ENCODE measurements at regions of chr17 and their contacts with region 1.

Region 1: DNA sequence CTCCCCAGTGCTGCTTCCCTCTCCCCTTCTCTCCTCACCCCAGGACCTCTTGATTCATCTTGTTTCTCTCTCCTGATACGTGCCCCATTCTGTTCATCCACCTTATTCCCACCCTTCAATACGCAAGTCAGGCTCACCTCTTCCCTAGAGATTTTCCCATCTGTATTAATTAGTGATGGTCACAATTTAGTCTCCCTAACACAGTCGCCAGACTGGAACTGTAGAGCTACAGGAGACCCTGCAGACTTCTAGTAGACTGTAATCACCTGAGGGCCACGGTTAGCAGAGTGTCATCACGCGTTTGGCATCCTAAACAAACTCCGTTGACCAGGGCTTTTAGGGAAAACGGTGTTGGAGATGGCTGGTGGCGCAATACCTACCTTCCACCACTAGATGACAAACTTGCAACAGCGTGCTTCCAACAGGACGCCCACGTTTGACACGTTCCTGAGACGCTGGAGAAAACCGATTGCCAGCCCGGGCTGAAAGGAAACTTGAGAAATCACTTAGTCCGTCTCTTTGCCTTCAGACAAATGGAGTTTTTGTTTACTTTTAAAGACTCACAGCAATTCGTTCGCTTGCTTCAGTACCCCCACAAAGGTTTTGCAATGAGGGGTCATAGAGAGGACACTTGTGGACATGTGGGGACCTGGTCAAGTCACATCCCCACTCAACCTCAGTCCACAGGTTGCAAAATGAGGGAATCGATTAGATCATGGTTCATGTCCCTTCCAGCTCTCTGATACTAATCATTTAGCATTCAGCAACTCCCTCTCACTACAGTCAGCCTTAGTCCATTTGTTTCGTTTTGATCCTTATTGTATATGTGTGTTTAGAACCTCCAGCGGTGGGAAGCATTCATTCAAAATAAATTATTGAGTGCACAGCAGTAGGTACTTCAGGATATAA is 20.6 kb downstream of the MYL4 start:
- DNase-seq: peak; percentile 80 to 88
- ATAC-seq: peak; percentile 83 to 95 (median 92)
- H3K4me3 ChIP-seq: peak overlapping the region; percentile 50
- H3K27ac ChIP-seq: no peak overlapping the region
- H3K4me1 ChIP-seq: peaks cover 6% of the 10 kb centered on the region
- H3K27me3 ChIP-seq: no peaks in the 10 kb centered on the region
- CTCF ChIP-seq: peak; percentile 98

Region 2: GRCh38 chr17:47315451-47316266 is 85.9 kb after region 1 on chr17:
- intact Hi-C with region 1: loop called (anchors 1 to 2 kb)
- DNase-seq: no peak
- ATAC-seq: peak; percentile 74 to 88 (median 78)
- H3K4me3 ChIP-seq: no peak overlapping the region
- H3K27ac ChIP-seq: no peak overlapping the region
- H3K4me1 ChIP-seq: no peaks in the 10 kb centered on the region
- H3K27me3 ChIP-seq: no peaks in the 10 kb centered on the region
- CTCF ChIP-seq: peak; percentile 87

Measured in psoas muscle (tissue), 8 donors.